Calu3 (cell line): ENCODE measurements at regions of chr15 and their contacts with region 1.

Region 1: DNA sequence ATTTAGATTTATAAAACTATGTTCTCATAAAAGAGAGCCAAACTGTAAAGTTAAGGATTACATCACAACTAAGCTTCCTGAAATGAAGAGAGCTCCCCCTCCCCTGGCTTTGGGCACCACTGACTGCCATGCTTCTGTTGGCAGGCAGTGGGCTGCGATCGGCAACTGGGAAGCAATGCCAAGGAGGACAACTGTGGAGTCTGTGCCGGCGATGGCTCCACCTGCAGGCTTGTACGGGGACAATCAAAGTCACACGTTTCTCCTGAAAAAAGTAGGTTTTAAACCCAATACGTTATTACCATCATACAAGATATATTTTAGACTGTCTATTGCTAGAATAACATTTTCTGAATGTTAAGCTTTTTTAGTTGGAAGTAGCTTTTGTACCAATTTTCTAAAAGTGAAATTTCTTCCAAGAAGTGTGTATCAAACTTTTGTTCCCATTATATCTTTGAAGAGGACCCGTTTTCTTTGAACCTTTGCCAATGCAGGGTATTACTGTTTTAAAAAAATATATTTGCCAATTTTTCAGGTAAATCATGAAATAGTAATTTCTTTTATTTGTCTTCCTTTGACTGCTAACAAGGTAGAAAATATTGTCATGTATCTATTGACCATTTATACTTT is 184.1 kb downstream of the ADAMTSL3 start:
- DNase-seq: peak; percentile 74
- H3K4me3 Mint-ChIP-seq: no peak overlapping the region
- H3K27ac Mint-ChIP-seq: no peak overlapping the region
- H3K4me1 Mint-ChIP-seq: peaks cover 11% of the 10 kb centered on the region
- H3K27me3 Mint-ChIP-seq: peaks cover 12% of the 10 kb centered on the region
- CTCF ChIP-seq: peak; percentile 67

Region 2: GRCh38 chr15:83436458-83437158 is 401.4 kb before region 1 on chr15:
- CTCF ChIA-PET with region 1: no interaction called
- intact Hi-C with region 1: loop called (anchors 10 kb)
- DNase-seq: peak; percentile 25
- H3K4me3 Mint-ChIP-seq: no peak overlapping the region
- H3K27ac Mint-ChIP-seq: no peak overlapping the region
- H3K4me1 Mint-ChIP-seq: no peaks in the 10 kb centered on the region
- H3K27me3 Mint-ChIP-seq: peaks cover 51% of the 10 kb centered on the region
- CTCF ChIP-seq: peak; percentile 52

Region 3: GRCh38 chr15:83567318-83567717 is 270.7 kb before region 1 on chr15:
- CTCF ChIA-PET with region 1: interaction called, 7 read pairs
- intact Hi-C with region 1: loop called (anchors 1 kb)
- DNase-seq: no peak
- H3K4me3 Mint-ChIP-seq: no peak overlapping the region
- H3K27ac Mint-ChIP-seq: no peak overlapping the region
- H3K4me1 Mint-ChIP-seq: no peaks in the 10 kb centered on the region
- H3K27me3 Mint-ChIP-seq: no peaks in the 10 kb centered on the region
- CTCF ChIP-seq: no peak

Region 4: GRCh38 chr15:83753949-83754416 is 84.1 kb before region 1 on chr15:
- CTCF ChIA-PET with region 1: no interaction called
- intact Hi-C with region 1: loop called (anchors 5 kb)
- DNase-seq: peak; percentile 51
- H3K4me3 Mint-ChIP-seq: no peak overlapping the region
- H3K27ac Mint-ChIP-seq: peak overlapping the region; percentile 57
- H3K4me1 Mint-ChIP-seq: peaks cover 30% of the 10 kb centered on the region
- H3K27me3 Mint-ChIP-seq: no peaks in the 10 kb centered on the region
- CTCF ChIP-seq: no peak

Region 5: GRCh38 chr15:84079885-84080777 is 242.1 kb after region 1 on chr15:
- CTCF ChIA-PET with region 1: no interaction called
- intact Hi-C with region 1: no loop called
- DNase-seq: no peak
- H3K4me3 Mint-ChIP-seq: peak overlapping the region; percentile 61
- H3K27ac Mint-ChIP-seq: no peak overlapping the region
- H3K4me1 Mint-ChIP-seq: peaks cover 9% of the 10 kb centered on the region
- H3K27me3 Mint-ChIP-seq: peaks cover 79% of the 10 kb centered on the region
- CTCF ChIP-seq: no peak